GM13977 (cell line): ENCODE measurements at regions of chrX and their contacts with region 1.

Region 1: GRCh38 chrX:65581661-65582339 is 47.2 kb upstream of the LAS1L start:
- DNase-seq: peak; percentile 68
- CTCF ChIP-seq: peak; percentile 90

Region 2: GRCh38 chrX:65502618-65503017 is 79.2 kb before region 1 on chrX:
- in situ Hi-C with region 1: no loop called
- DNase-seq: no peak
- CTCF ChIP-seq: no peak

Region 3: DNA sequence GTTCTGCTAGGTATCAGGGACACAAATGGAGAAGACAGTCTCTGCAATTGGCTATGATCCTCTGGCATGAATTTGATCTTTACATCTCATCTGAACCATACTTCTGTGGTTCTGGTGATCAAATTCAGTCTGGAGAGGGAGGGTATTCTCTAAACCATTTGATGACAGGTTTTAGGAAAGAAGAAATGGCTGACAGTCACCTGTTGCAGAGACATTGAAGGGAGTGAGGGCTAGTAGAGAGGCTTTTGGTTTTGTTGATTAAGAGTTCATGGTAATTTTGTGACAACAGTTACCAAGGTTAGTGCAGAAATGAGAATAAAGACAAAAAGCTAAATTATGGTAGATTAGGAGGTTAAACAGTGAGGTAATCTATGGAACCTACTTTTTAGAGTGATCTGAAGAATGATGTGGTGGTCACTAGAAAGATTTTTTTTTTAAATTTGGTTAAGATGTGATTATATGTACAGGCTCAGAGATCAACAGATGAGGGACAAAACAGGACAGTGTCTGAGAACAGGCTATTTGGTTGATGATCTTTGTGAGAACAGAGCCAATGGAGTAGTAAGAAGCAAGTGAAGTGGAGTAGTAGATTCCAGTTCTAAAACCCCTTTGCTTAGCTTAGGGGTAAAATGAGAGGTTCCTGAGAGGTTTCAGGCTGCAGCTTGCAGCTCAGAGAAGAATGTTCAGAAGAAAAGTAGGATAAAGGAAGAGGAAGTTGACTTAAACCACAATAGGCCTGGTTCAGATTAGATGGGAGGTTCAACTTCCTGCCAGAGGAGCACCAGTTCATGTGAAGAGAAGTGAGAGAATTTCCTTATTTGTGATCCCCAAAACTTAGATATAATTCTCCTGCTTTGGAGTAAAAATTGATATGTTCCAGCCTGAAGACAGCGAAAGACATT is 423.4 kb after region 1 on chrX:
- in situ Hi-C with region 1: loop called (anchors 10 kb)
- DNase-seq: no peak
- CTCF ChIP-seq: no peak